ENCODE measurements at regions of chr6 and their contacts with region 1.

Region 1: GRCh38 chr6:134822920-134823709 is 126.8 kb downstream of the ALDH8A1 start:
- DNase-seq: peak in 4 of 9 experiments; percentile 22 to 74 (median 58)
- ATAC-seq: peak; percentile 61
- H3K4me3 ChIP-seq: no peak overlapping the region
- H3K4me3 Mint-ChIP-seq: no peak overlapping the region
- H3K27ac ChIP-seq: no peak overlapping the region
- H3K27ac Mint-ChIP-seq: no peak overlapping the region
- H3K4me1 ChIP-seq: no peaks in the 10 kb centered on the region
- H3K4me1 Mint-ChIP-seq: peaks cover 4% of the 10 kb centered on the region
- H3K27me3 ChIP-seq: no peaks in the 10 kb centered on the region
- H3K27me3 Mint-ChIP-seq: peaks cover 6% of the 10 kb centered on the region
- CTCF ChIP-seq: peak; percentile 76

Region 2: GRCh38 chr6:134111062-134111677 is 711.9 kb before region 1 on chr6:
- CTCF ChIA-PET with region 1: interaction called, 3 read pairs
- POLR2A ChIA-PET with region 1: no interaction called
- intact Hi-C with region 1: loop called in 1 of 2 experiments (anchors 1 kb)
- DNase-seq: peak in 6 of 9 experiments; percentile 7 to 77 (median 44)
- ATAC-seq: peak; percentile 96
- H3K4me3 ChIP-seq: no peak overlapping the region
- H3K4me3 Mint-ChIP-seq: no peak overlapping the region
- H3K27ac ChIP-seq: no peak overlapping the region
- H3K27ac Mint-ChIP-seq: no peak overlapping the region
- H3K4me1 ChIP-seq: no peaks in the 10 kb centered on the region
- H3K4me1 Mint-ChIP-seq: peaks cover 3% of the 10 kb centered on the region
- H3K27me3 ChIP-seq: no peaks in the 10 kb centered on the region
- H3K27me3 Mint-ChIP-seq: peaks cover 14% of the 10 kb centered on the region
- CTCF ChIP-seq: peak; percentile 89

Region 3: DNA sequence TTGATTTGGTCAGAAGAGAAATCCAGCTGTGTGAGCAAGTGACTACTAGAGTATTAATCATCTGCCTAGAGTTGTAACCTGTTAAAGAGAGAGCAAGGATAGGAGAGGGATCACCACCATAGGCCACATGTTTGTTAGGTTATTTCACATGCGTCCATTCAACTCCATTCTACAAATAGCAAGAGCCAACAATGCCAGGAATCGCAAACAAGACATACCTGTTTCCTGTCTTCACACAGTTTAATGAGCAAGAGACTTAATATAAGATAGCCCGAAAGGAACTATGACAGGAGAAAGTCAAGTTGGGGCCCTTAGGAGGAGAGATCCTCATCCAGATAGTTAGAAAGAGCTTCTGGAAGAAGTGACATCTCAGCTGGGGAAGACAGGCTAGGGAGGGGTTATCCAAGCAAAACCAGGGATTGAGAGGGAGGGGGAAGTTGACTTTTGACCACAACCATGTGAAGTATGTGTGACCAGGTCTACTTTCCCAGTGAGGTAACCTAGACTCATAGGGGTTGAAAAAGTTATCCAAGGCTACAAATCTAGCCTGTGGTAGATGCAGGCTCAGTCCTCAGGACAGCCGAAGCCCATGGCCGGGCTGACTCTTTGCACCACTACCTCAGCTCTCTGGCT is 20.6 kb before region 1 on chr6:
- CTCF ChIA-PET with region 1: no interaction called
- POLR2A ChIA-PET with region 1: no interaction called
- intact Hi-C with region 1: no loop called
- DNase-seq: no peak
- ATAC-seq: no peak
- H3K4me3 ChIP-seq: no peak overlapping the region
- H3K4me3 Mint-ChIP-seq: no peak overlapping the region
- H3K27ac ChIP-seq: no peak overlapping the region
- H3K27ac Mint-ChIP-seq: no peak overlapping the region
- H3K4me1 ChIP-seq: no peaks in the 10 kb centered on the region
- H3K4me1 Mint-ChIP-seq: no peaks in the 10 kb centered on the region
- H3K27me3 ChIP-seq: no peaks in the 10 kb centered on the region
- H3K27me3 Mint-ChIP-seq: peaks cover 12% of the 10 kb centered on the region
- CTCF ChIP-seq: no peak

Region 4: DNA sequence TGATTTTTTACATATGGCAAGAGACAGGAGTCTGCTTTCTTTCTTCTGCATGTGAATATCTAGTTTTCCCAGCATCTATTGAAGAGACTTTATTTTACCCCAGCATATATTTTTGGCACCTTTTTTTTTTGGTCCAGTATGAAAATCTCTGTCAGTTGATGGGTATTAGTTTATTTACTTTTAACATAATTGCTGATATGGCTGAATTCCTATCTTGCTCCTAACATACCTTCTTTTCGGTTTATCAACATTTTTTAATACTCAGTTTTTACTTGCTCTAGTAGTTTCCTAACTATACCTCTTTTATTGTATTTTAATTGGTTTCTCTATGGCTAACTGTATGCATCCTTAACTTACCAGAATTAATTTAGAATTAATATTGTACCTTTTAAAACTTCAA is 950.9 kb after region 1 on chr6:
- CTCF ChIA-PET with region 1: no interaction called
- POLR2A ChIA-PET with region 1: no interaction called
- intact Hi-C with region 1: no loop called
- DNase-seq: no peak
- ATAC-seq: no peak
- H3K4me3 ChIP-seq: no peak overlapping the region
- H3K4me3 Mint-ChIP-seq: no peak overlapping the region
- H3K27ac ChIP-seq: no peak overlapping the region
- H3K27ac Mint-ChIP-seq: no peak overlapping the region
- H3K4me1 ChIP-seq: no peaks in the 10 kb centered on the region
- H3K4me1 Mint-ChIP-seq: no peaks in the 10 kb centered on the region
- H3K27me3 ChIP-seq: no peaks in the 10 kb centered on the region
- H3K27me3 Mint-ChIP-seq: peaks cover 2% of the 10 kb centered on the region
- CTCF ChIP-seq: no peak